ENCODE measurements at regions of chr17 and their contacts with region 1.

Region 1: DNA sequence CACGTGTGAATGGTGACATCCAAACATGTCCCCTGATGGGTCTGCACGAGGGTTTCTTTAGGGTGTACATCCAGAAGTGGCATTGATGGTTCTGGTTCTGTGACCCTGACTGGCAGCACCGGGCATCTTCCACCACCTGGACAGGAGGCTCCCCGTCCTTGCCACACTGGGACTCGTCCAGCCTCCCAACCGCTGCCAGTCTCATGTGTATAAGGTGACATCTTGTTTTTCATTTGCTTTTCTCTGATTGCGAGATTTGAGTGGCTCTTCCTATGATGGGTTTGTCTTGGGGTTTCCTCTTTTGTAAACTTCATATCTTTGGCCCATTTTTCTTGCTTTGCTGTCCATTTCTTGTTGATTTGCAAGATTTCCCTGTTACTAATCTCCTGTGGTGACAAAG is 9.2 kb upstream of the LIMD2 start:
- DNase-seq: no peak
- H3K4me3 Mint-ChIP-seq: no peak overlapping the region
- H3K27ac Mint-ChIP-seq: peak overlapping the region; percentile 36
- H3K4me1 Mint-ChIP-seq: peaks cover 61% of the 10 kb centered on the region
- H3K27me3 Mint-ChIP-seq: no peaks in the 10 kb centered on the region

Region 2: DNA sequence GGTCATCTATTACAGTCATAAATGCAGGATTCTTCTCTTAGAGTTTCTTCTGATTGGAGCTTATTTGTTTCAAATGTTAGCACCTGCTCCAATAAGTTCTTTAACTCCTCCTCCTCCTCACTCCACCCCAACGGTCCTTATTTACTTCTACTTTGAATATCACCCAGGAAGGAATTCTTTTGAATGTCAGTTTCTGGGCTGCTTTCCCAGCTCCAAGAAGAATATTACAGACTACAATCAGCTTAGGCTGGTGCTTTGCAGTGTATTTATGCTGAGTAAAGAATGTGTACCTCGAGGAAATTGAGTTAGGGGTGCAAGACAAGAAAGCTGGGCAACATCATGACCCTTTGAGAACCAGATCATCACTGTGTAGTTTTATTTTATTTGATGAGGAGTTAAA is 56.0 kb before region 1 on chr17:
- CTCF ChIA-PET with region 1: no interaction called
- POLR2A ChIA-PET with region 1: no interaction called
- DNase-seq: no peak
- H3K4me3 Mint-ChIP-seq: no peak overlapping the region
- H3K27ac Mint-ChIP-seq: no peak overlapping the region
- H3K4me1 Mint-ChIP-seq: peaks cover 9% of the 10 kb centered on the region
- H3K27me3 Mint-ChIP-seq: no peaks in the 10 kb centered on the region

Region 3: DNA sequence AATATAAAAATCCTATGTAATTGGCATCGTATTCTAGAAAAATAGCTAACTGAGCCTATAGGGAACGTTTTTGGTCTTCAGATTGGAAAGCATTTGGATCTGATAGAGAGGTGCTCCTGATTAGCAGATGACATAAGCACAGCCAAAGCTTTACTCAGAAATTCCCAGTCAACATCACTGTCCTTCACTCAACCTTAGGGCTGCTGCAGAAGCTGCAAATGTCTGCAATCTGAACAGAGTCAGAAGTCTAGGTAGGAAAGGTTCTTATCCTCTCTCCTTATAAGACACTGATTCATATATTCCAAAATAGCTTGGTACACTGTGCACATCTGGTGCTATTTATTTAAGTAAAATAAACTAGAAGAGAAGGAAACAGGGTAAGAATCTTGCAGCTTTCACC is 13.3 kb after region 1 on chr17:
- CTCF ChIA-PET with region 1: interaction called, 10 read pairs
- POLR2A ChIA-PET with region 1: no interaction called
- DNase-seq: no peak
- H3K4me3 Mint-ChIP-seq: no peak overlapping the region
- H3K27ac Mint-ChIP-seq: no peak overlapping the region
- H3K4me1 Mint-ChIP-seq: peaks cover 2% of the 10 kb centered on the region
- H3K27me3 Mint-ChIP-seq: no peaks in the 10 kb centered on the region

Region 4: GRCh38 chr17:63859257-63859656 is 150.2 kb after region 1 on chr17:
- CTCF ChIA-PET with region 1: no interaction called
- POLR2A ChIA-PET with region 1: no interaction called
- DNase-seq: no peak
- H3K4me3 Mint-ChIP-seq: no peak overlapping the region
- H3K27ac Mint-ChIP-seq: no peak overlapping the region
- H3K4me1 Mint-ChIP-seq: no peaks in the 10 kb centered on the region
- H3K27me3 Mint-ChIP-seq: peaks cover 29% of the 10 kb centered on the region

Measured in activated CD4-positive, alpha-beta T cell treated with anti-CD3 and anti-CD28 coated beads, Interleukin-2, amount 10 ng/mL, durations not matched to agents 7 days and 5 days (primary cell).